ENCODE measurements at regions of chr20 and their contacts with region 1.

Region 1: GRCh38 chr20:17536944-17537444 is 5.8 kb upstream of the BFSP1 start:
- DNase-seq: no peak
- H3K4me3 ChIP-seq: no peak overlapping the region
- CTCF ChIP-seq: peak; percentile 87

Region 2: GRCh38 chr20:17558154-17558940 is 21.4 kb after region 1 on chr20:
- CTCF ChIA-PET with region 1: interaction called, 44 read pairs
- POLR2A ChIA-PET with region 1: interaction called, 5 read pairs
- DNase-seq: no peak
- H3K4me3 ChIP-seq: peak overlapping the region; percentile 39
- CTCF ChIP-seq: no peak

Region 3: DNA sequence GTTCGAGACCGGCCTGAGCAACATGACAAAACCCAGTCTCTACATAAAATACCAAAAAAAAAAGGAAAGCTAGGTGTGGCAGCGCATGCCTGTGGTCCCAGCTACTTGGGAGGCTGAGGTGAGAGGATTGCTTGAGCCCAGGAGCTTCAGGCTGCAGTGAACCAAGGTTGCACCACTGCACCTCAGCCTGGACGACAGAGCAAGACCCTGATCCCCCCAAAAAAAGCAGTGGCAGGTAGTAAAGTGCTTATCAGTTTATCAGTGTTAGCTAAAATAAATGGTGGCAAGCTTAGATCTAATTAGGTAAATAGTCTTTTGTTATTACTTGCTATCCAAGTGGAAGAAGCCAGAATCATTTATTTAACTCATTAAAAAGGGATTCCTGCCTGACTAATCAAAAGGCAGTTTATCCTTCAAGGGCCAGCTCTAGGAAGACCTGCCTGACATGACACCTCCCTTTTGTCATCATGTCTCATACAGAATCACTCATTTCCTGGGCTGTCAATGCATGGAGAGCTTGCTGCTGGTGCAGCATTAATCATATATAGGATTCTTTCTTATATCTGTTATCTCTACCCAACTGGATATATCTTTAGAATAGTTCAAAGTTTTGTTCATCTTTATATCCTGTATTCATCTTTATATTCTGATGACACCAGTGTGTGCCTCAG is 42.5 kb after region 1 on chr20:
- CTCF ChIA-PET with region 1: interaction called, 43 read pairs
- POLR2A ChIA-PET with region 1: no interaction called
- DNase-seq: no peak
- H3K4me3 ChIP-seq: no peak overlapping the region
- CTCF ChIP-seq: no peak

Region 4: DNA sequence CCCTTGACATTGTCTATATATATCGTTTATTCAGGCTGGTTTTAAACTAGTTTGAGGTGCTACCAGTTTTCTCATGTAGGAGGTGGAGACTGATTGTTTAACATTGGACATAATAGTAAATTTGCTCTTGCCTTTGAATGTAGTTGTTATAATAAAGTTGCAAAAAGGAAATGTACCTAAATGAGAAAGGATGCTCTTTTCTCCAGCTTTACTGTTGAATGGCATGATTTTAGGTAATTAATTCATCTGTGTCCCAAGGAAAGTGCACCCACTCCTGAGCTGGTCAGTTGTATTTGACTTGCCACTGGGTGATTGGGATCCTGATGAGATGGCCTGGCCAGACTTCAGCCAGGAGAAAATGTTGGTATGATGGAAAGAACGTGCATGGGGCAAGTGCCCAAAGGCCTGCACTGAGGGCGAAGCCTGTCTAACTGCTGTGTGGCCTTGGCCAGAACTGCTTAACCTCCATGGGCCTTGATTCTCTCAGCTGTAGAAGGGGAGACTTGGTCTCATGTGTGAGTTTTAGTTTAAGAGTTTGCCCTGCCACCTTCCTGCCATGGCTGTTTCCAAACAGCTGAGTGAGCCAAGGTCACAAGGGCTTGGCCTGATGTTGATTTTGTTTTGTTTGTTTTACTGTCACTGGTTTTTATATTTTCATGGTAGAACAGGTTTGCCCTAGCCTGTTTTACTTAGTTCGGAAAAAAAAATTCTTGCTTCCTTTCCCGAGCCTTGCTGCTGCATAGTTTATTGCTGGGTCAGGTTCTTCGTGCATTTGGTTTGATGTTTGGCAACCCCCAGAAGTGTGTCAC is 68.1 kb after region 1 on chr20:
- CTCF ChIA-PET with region 1: interaction called, 25 read pairs
- POLR2A ChIA-PET with region 1: interaction called, 5 read pairs
- DNase-seq: no peak
- H3K4me3 ChIP-seq: no peak overlapping the region
- CTCF ChIP-seq: no peak

Region 5: DNA sequence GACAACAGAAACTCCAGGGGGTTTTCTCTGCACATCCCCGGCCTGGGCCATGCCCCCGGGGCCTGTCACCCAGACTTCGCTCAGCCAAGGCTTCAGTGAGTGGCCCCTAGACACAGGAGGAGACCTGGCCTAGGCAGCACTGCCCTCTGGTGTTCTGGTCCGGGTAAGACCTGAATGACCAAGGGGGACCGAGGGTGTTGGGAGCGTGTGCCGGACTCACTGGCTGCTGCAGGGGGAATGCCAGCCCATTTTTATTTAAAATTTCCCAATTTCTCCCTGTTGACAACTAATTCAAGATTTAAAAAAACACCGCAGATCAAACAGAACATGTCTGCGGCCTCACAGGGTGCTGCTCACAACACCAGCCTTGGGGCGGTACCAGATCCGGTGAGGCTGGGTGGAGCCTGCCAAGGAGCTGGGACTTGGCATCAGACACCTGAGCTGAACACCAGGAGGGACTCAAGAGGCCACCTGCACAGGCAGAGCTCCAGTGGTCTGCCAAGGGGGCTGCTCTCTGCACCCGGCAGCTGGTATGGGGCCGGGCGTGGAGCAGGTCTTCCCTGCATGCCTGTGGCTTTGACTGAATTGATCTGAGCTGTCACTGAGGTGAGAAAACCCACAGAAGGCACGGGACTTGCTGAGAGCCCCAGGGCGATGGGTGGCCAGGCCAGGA is 80.7 kb after region 1 on chr20:
- CTCF ChIA-PET with region 1: interaction called, 19 read pairs
- POLR2A ChIA-PET with region 1: no interaction called
- DNase-seq: no peak
- H3K4me3 ChIP-seq: no peak overlapping the region
- CTCF ChIP-seq: peak; percentile 66